GM12878 (cell line): ENCODE measurements at regions of chr3 and their contacts with region 1.

Region 1: GRCh38 chr3:73448761-73449301 is 175.9 kb downstream of the PDZRN3 start:
- DNase-seq: peak; percentile 94
- ATAC-seq: peak; percentile 87
- H3K4me3 ChIP-seq: peak overlapping the region; percentile 3; the same call in 1 of the 2 replicates
- H3K27ac ChIP-seq: peak overlapping the region; percentile 80
- H3K4me1 ChIP-seq: peaks cover 37% of the 10 kb centered on the region
- H3K27me3 ChIP-seq: no peaks in the 10 kb centered on the region
- CTCF ChIP-seq: no peak
- EP300 ChIP-seq: peak; percentile 86 to 99
- POLR2A ChIP-seq: no peak
- RAD21 ChIP-seq: no peak

Region 2: GRCh38 chr3:73100741-73101559 is 347.9 kb before region 1 on chr3:
- CTCF ChIA-PET with region 1: interaction called, 5 read pairs
- POLR2A ChIA-PET with region 1: interaction called, 8 read pairs
- RAD21 ChIA-PET with region 1: no interaction called
- SMC1A ChIA-PET with region 1: interaction called, 3 read pairs
- in situ Hi-C with region 1: no loop called
- intact Hi-C with region 1: loop called (anchors 5 kb)
- DNase-seq: peak; percentile 23
- ATAC-seq: peak; percentile 98
- H3K4me3 ChIP-seq: no peak overlapping the region
- H3K27ac ChIP-seq: no peak overlapping the region
- H3K4me1 ChIP-seq: no peaks in the 10 kb centered on the region
- H3K27me3 ChIP-seq: no peaks in the 10 kb centered on the region; a peak in 1 of 4 replicates
- CTCF ChIP-seq: peak; percentile 89 to 95 (median 95); a peak in 5 of 6 replicates
- EP300 ChIP-seq: no peak
- POLR2A ChIP-seq: no peak
- RAD21 ChIP-seq: peak; percentile 87

Region 3: DNA sequence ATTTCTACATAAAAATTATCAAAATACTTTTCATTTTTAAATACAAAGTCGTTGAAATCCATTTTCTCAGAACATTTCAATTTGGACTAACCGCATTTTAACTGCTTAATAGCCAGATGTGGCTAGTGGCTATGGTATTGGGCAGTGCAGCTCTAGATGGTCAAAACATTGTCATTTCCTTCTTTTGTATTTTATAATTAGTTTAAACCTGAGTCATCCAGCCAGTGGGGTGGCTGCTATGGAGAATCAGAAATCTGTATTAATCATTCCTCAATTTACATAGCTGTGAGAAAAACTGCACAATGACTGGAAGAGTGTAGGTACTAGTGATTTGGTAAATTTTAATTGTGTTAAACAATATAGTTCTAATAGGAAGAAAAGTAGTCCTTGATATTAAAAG is 69.4 kb before region 1 on chr3:
- CTCF ChIA-PET with region 1: no interaction called
- POLR2A ChIA-PET with region 1: no interaction called
- RAD21 ChIA-PET with region 1: no interaction called
- SMC1A ChIA-PET with region 1: no interaction called
- in situ Hi-C with region 1: no loop called
- intact Hi-C with region 1: loop called (anchors 2 kb)
- DNase-seq: no peak
- ATAC-seq: peak; percentile 70
- H3K4me3 ChIP-seq: no peak overlapping the region
- H3K27ac ChIP-seq: no peak overlapping the region
- H3K4me1 ChIP-seq: no peaks in the 10 kb centered on the region
- H3K27me3 ChIP-seq: no peaks in the 10 kb centered on the region
- CTCF ChIP-seq: no peak
- EP300 ChIP-seq: no peak
- POLR2A ChIP-seq: no peak
- RAD21 ChIP-seq: no peak

Region 4: GRCh38 chr3:73389928-73390327 is 58.9 kb before region 1 on chr3:
- CTCF ChIA-PET with region 1: no interaction called
- POLR2A ChIA-PET with region 1: no interaction called
- RAD21 ChIA-PET with region 1: no interaction called
- SMC1A ChIA-PET with region 1: no interaction called
- in situ Hi-C with region 1: no loop called
- intact Hi-C with region 1: no loop called
- DNase-seq: no peak
- ATAC-seq: no peak
- H3K4me3 ChIP-seq: no peak overlapping the region
- H3K27ac ChIP-seq: no peak overlapping the region
- H3K4me1 ChIP-seq: no peaks in the 10 kb centered on the region
- H3K27me3 ChIP-seq: no peaks in the 10 kb centered on the region; a peak in 1 of 4 replicates
- CTCF ChIP-seq: no peak
- EP300 ChIP-seq: no peak
- POLR2A ChIP-seq: no peak
- RAD21 ChIP-seq: no peak

Region 5: GRCh38 chr3:73432023-73432705 is 16.7 kb before region 1 on chr3:
- CTCF ChIA-PET with region 1: interaction called, 10 read pairs
- POLR2A ChIA-PET with region 1: no interaction called
- RAD21 ChIA-PET with region 1: no interaction called
- SMC1A ChIA-PET with region 1: interaction called, 4 read pairs
- in situ Hi-C with region 1: no loop called
- intact Hi-C with region 1: no loop called
- DNase-seq: no peak
- ATAC-seq: peak; percentile 48; the same call in 2 of the 3 replicates
- H3K4me3 ChIP-seq: no peak overlapping the region
- H3K27ac ChIP-seq: no peak overlapping the region
- H3K4me1 ChIP-seq: no peaks in the 10 kb centered on the region
- H3K27me3 ChIP-seq: no peaks in the 10 kb centered on the region
- CTCF ChIP-seq: peak; percentile 53 to 62 (median 62)
- EP300 ChIP-seq: no peak
- POLR2A ChIP-seq: no peak
- RAD21 ChIP-seq: peak; percentile 62

Region 6: DNA sequence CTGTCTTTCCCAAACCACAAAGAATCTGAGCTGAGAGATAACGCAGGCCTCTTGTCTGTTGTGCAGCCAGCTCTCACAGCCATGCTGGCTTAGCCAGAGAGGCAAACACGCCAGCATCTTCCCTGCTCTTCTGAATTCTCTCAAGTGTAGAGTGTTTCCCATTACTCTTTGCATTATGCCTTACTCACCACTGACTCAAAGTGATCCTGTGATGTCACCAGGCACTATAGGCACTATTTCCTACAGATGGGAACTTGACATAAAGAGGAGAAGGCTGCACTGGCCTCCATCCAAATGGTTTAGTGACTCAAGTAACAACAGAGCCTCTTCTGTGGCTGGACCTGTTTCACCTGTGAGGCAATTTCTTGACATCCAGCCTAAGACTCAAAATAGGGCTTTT is 131.5 kb after region 1 on chr3:
- CTCF ChIA-PET with region 1: no interaction called
- POLR2A ChIA-PET with region 1: no interaction called
- RAD21 ChIA-PET with region 1: no interaction called
- SMC1A ChIA-PET with region 1: no interaction called
- in situ Hi-C with region 1: no loop called
- intact Hi-C with region 1: no loop called
- DNase-seq: no peak
- ATAC-seq: no peak
- H3K4me3 ChIP-seq: no peak overlapping the region
- H3K27ac ChIP-seq: no peak overlapping the region
- H3K4me1 ChIP-seq: no peaks in the 10 kb centered on the region
- H3K27me3 ChIP-seq: no peaks in the 10 kb centered on the region
- CTCF ChIP-seq: no peak
- EP300 ChIP-seq: no peak
- POLR2A ChIP-seq: no peak
- RAD21 ChIP-seq: no peak

Region 7: DNA sequence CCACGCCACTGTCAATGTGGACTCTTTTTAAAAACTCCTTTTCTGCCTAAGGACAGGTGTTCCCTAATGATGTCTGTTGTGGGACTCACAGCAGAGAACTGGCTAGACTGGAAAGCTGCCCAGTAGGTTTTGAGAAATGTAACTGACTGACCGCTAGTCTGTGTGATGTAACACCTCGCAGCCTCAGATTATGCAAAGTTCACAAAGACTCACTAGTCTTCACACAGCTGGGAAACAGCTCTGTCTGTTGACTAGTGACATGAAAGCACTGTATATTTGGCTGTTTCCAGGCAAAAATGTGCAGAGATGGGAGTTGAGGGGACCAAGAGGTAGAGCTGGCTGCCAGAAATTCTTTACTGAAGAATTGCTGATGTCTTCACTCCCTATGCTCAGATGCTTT is 165.6 kb after region 1 on chr3:
- CTCF ChIA-PET with region 1: no interaction called
- POLR2A ChIA-PET with region 1: no interaction called
- RAD21 ChIA-PET with region 1: no interaction called
- SMC1A ChIA-PET with region 1: no interaction called
- in situ Hi-C with region 1: no loop called
- intact Hi-C with region 1: no loop called
- DNase-seq: no peak
- ATAC-seq: no peak
- H3K4me3 ChIP-seq: no peak overlapping the region
- H3K27ac ChIP-seq: no peak overlapping the region
- H3K4me1 ChIP-seq: no peaks in the 10 kb centered on the region
- H3K27me3 ChIP-seq: no peaks in the 10 kb centered on the region
- CTCF ChIP-seq: no peak
- EP300 ChIP-seq: no peak
- POLR2A ChIP-seq: no peak
- RAD21 ChIP-seq: no peak